ENCODE measurements at regions of chr4 and their contacts with region 1.

Region 1: GRCh38 chr4:21697583-21697982 is 251.0 kb downstream of the KCNIP4 start:
- DNase-seq: peak in 1 of 2 experiments; percentile 63
- H3K4me3 ChIP-seq: no peak overlapping the region
- H3K27ac ChIP-seq: no peak overlapping the region
- H3K4me1 ChIP-seq: no peaks in the 10 kb centered on the region
- H3K27me3 ChIP-seq: no peaks in the 10 kb centered on the region
- CTCF ChIP-seq: no peak

Region 2: GRCh38 chr4:21517460-21517859 is 180.1 kb before region 1 on chr4:
- CTCF ChIA-PET with region 1: no interaction called
- POLR2A ChIA-PET with region 1: no interaction called
- intact Hi-C with region 1: no loop called
- DNase-seq: no peak
- H3K4me3 ChIP-seq: no peak overlapping the region
- H3K27ac ChIP-seq: no peak overlapping the region
- H3K4me1 ChIP-seq: no peaks in the 10 kb centered on the region
- H3K27me3 ChIP-seq: no peaks in the 10 kb centered on the region
- CTCF ChIP-seq: no peak

Region 3: DNA sequence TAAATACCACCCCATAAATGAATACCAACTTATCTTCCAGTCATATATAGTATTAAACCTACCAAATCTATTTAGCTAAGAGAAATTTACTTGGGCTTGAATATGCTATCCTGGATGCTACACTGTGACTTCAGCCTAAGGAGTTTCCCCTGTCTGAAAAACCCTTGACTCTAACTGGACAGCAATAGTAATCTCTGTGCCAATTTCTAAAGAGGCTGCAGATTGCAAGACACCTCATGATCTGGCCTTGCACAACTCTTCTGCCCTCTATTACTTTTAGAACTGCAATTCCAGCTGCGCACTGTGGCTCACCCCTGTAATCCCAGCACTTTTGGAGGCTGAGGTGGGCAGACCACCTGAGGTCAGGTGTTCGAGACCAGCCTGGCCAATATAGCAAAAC is 120.5 kb before region 1 on chr4:
- CTCF ChIA-PET with region 1: no interaction called
- POLR2A ChIA-PET with region 1: no interaction called
- intact Hi-C with region 1: no loop called
- DNase-seq: no peak
- H3K4me3 ChIP-seq: no peak overlapping the region
- H3K27ac ChIP-seq: no peak overlapping the region
- H3K4me1 ChIP-seq: no peaks in the 10 kb centered on the region
- H3K27me3 ChIP-seq: no peaks in the 10 kb centered on the region
- CTCF ChIP-seq: no peak

Region 4: DNA sequence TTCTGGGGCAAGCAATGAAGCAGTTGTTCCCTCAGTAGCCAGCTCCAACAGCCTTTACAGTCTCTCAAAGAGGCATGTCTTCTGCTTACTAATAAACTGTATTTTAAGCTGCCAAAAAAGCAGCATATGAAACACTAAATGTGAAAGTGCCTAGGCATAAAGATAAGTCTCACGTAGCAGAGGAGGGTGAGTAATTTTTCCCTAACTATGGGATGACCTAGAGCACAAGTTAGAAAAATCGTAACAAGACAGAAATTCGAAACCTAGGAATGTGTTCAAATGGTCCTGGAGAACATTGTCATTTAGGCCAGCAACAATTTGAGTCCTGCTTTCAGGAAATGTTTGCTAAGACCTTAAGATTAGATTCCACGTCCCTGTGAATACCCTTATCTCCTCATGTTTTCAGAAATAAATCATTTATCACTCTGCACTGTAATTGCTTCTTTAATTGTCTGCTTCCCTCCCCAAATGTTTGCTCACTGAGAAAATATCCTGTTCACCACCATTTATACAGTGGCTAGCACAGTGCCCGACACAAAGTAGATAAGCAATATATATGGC is 28.8 kb after region 1 on chr4:
- CTCF ChIA-PET with region 1: interaction called, 11 read pairs
- POLR2A ChIA-PET with region 1: no interaction called
- intact Hi-C with region 1: no loop called
- DNase-seq: no peak
- H3K4me3 ChIP-seq: no peak overlapping the region
- H3K27ac ChIP-seq: no peak overlapping the region
- H3K4me1 ChIP-seq: no peaks in the 10 kb centered on the region
- H3K27me3 ChIP-seq: no peaks in the 10 kb centered on the region
- CTCF ChIP-seq: no peak

Measured in PC-9 (cell line).